CD4-positive, alpha-beta T cell (primary cell): ENCODE measurements at regions of chr2 and their contacts with region 1.

Region 1: GRCh38 chr2:28870146-28870891 is at the start of gene TRMT61B:
- DNase-seq: peak; percentile 92 to 99 (median 97)
- ATAC-seq: peak; percentile 92
- H3K4me3 ChIP-seq: peak within 1 kb of the TSS; percentile 88
- H3K4me3 Mint-ChIP-seq: peak within 1 kb of the TSS; percentile 99
- H3K27ac ChIP-seq: peak within 1 kb of the TSS; percentile 82 to 93
- H3K27ac Mint-ChIP-seq: peak within 1 kb of the TSS; percentile 99
- H3K4me1 ChIP-seq: peaks cover 41% of the 10 kb centered on the region
- H3K4me1 Mint-ChIP-seq: peaks cover 37% of the 10 kb centered on the region
- H3K27me3 ChIP-seq: no peaks in the 10 kb centered on the region
- H3K27me3 Mint-ChIP-seq: peaks cover 7% of the 10 kb centered on the region
- CTCF ChIP-seq: no peak
- total RNA-seq, gene TRMT61B: 18.7 to 20.8 TPM

Region 2: DNA sequence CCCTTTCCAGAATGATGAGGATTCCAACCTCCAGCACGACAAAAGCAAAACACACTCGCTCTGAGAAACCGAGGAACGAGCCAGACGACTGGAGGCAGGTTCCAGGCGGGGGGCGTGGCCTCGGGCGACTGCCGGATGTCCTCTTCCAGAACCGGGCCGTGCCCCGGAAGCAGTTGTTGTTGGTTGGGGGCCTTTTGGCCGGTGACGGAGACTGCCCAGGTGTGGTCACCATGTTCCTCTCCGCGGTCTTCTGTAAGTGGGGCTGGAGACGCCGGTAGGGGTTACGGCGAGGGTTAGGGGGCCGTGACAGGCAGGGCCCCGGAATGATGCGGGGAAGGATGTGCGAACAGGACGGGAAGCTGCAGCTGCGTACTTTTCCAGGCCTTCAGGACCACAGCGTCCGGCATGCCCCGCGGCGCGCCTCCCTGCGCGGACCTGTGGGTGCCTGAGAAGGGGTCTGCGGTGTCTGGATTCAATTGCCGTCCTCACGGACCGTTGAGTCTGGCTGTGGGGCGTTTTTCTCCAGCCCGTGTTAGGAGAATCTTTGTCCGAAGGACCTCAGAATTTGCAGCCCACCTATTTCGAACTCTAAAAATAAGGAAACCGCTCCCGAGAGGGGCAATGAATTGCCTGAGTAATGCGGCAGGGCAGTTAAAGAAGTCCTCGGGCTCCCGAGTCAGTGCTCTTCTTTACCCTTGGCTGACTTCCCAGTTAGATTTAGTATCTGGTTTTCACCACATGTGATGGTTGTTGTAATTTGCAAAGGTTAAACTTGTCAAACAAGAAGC is 1098.6 kb before region 1 on chr2 and contains the start of gene MRPL33:
- CTCF ChIA-PET with region 1: no interaction called
- POLR2A ChIA-PET with region 1: no interaction called
- intact Hi-C with region 1: loop called in 1 of 2 experiments (anchors 2 kb)
- DNase-seq: peak; percentile 85 to 95 (median 89)
- ATAC-seq: peak; percentile 89
- H3K4me3 ChIP-seq: peak within 1 kb of the TSS; percentile 73
- H3K4me3 Mint-ChIP-seq: peak within 1 kb of the TSS; percentile 100
- H3K27ac ChIP-seq: peak within 1 kb of the TSS; percentile 74 to 91
- H3K27ac Mint-ChIP-seq: peak within 1 kb of the TSS; percentile 100
- H3K4me1 ChIP-seq: peaks cover 15% of the 10 kb centered on the region
- H3K4me1 Mint-ChIP-seq: peaks cover 59% of the 10 kb centered on the region
- H3K27me3 ChIP-seq: no peaks in the 10 kb centered on the region
- H3K27me3 Mint-ChIP-seq: no peaks in the 10 kb centered on the region
- CTCF ChIP-seq: no peak
- total RNA-seq, gene MRPL33: 33.1 to 37.2 TPM

Region 3: GRCh38 chr2:28855193-28855592 is 15.1 kb before region 1 on chr2:
- CTCF ChIA-PET with region 1: no interaction called
- POLR2A ChIA-PET with region 1: interaction called, 11 read pairs
- intact Hi-C with region 1: no loop called
- DNase-seq: no peak
- ATAC-seq: no peak
- H3K4me3 ChIP-seq: no peak overlapping the region
- H3K4me3 Mint-ChIP-seq: no peak overlapping the region
- H3K27ac ChIP-seq: no peak overlapping the region
- H3K27ac Mint-ChIP-seq: no peak overlapping the region
- H3K4me1 ChIP-seq: no peaks in the 10 kb centered on the region
- H3K4me1 Mint-ChIP-seq: no peaks in the 10 kb centered on the region
- H3K27me3 ChIP-seq: no peaks in the 10 kb centered on the region
- H3K27me3 Mint-ChIP-seq: no peaks in the 10 kb centered on the region
- CTCF ChIP-seq: no peak

Region 4: DNA sequence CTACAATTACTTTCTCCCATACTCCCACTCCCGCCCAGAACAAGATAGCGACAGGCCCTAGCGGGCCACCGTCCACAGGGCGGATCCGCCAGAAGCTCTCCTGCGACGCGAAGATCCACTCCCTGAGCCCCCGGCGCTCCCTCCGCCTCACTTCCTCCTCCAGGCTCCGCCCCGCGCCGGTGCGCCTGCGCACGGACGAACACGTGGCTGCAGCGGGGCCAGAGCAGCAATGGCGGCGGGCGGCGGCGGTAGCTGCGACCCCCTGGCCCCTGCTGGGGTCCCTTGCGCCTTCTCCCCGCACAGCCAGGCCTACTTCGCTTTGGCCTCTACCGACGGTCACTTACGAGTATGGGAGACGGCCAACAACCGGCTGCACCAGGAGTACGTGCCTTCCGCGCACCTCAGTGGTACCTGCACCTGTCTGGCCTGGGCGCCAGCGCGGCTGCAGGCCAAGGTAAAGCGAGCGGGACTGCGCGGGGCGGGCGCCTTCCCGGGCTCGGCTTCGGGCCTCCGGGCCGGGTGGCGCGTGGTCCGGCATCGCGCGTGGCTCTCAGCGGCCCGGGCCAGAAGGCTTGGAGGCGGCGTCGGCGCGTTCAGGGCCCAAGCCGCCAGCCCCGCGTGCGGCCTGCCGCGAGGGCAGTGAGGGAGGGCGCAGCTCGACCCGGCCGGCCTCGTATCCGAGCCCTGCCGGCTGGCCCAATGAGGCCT is 24.3 kb after region 1 on chr2 and contains the start of gene WDR43:
- CTCF ChIA-PET with region 1: no interaction called
- POLR2A ChIA-PET with region 1: interaction called, 128 read pairs
- intact Hi-C with region 1: loop called (anchors 1 kb)
- DNase-seq: peak; percentile 90 to 99 (median 97)
- ATAC-seq: peak; percentile 97
- H3K4me3 ChIP-seq: peak within 1 kb of the TSS; percentile 89
- H3K4me3 Mint-ChIP-seq: peak within 1 kb of the TSS; percentile 97
- H3K27ac ChIP-seq: peak within 1 kb of the TSS; percentile 55 to 59
- H3K27ac Mint-ChIP-seq: peak within 1 kb of the TSS; percentile 91
- H3K4me1 ChIP-seq: peaks cover 24% of the 10 kb centered on the region
- H3K4me1 Mint-ChIP-seq: peaks cover 49% of the 10 kb centered on the region
- H3K27me3 ChIP-seq: no peaks in the 10 kb centered on the region
- H3K27me3 Mint-ChIP-seq: no peaks in the 10 kb centered on the region
- CTCF ChIP-seq: no peak
- total RNA-seq, gene WDR43: 62.4 to 73.2 TPM

Region 5: DNA sequence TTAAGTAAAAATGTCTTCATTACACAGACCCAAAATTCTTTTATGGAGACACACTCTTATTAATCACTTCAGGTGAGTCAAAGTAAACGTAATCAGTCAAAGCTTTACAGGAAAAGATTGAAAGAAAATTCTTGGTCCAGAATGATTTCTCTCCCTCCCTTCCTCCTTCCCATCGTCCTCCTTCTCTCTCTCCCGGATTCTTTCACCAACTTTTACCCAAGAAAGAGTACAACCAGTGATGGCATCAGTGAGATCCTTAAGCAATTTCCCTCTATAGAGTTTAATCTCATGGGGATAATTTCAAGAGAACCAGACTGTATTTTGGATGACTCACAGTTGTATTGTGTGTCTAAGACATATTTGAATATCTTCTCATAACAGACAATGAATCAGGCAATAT is 792.9 kb after region 1 on chr2:
- CTCF ChIA-PET with region 1: no interaction called
- POLR2A ChIA-PET with region 1: no interaction called
- intact Hi-C with region 1: no loop called
- DNase-seq: no peak
- ATAC-seq: no peak
- H3K4me3 ChIP-seq: no peak overlapping the region
- H3K4me3 Mint-ChIP-seq: no peak overlapping the region
- H3K27ac ChIP-seq: no peak overlapping the region
- H3K27ac Mint-ChIP-seq: no peak overlapping the region
- H3K4me1 ChIP-seq: no peaks in the 10 kb centered on the region
- H3K4me1 Mint-ChIP-seq: no peaks in the 10 kb centered on the region
- H3K27me3 ChIP-seq: peaks cover 0 to 8% of the 10 kb centered on the region in 2 experiments
- H3K27me3 Mint-ChIP-seq: peaks cover 22% of the 10 kb centered on the region
- CTCF ChIP-seq: no peak